GM10248 (cell line): ENCODE measurements at regions of chr17 and their contacts with region 1.

Region 1: GRCh38 chr17:72556944-72557826 is 436.4 kb downstream of the SOX9 start:
- DNase-seq: peak; percentile 84
- CTCF ChIP-seq: peak; percentile 80

Region 2: DNA sequence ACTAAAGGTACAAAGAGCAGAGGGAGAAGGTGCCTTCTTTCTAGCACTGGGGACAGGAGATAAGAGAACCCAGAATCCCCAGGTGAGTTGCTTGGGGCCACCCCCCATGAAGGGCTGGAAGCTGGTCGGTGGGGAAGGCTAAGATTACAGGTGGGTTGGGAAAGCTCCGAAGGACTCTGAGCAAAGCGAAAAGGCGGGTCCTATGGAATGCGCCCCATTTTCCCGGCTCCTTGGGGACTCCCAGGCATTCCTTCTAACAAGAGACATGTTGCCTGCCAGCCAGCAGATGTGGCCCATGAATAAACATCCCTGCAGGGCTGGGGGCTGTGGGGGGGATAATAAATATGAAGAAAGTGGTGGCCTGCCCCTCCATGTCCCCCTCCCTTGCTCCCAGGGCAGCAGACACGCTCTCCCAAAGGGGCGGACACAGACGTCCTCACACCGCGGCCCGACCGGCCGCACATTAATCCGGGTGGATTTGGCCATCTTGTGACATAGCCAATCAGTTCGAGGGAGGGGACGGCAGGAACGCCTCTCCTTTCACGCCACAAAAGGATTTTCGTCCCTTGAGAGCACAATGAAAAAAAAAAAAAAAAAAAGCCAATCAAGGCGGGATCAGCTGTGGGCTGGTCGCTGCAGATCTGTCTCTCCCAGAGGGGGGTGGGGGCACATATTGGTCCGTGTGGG is 337.9 kb before region 1 on chr17:
- CTCF ChIA-PET with region 1: no interaction called
- POLR2A ChIA-PET with region 1: no interaction called
- DNase-seq: no peak
- CTCF ChIP-seq: no peak

Region 3: DNA sequence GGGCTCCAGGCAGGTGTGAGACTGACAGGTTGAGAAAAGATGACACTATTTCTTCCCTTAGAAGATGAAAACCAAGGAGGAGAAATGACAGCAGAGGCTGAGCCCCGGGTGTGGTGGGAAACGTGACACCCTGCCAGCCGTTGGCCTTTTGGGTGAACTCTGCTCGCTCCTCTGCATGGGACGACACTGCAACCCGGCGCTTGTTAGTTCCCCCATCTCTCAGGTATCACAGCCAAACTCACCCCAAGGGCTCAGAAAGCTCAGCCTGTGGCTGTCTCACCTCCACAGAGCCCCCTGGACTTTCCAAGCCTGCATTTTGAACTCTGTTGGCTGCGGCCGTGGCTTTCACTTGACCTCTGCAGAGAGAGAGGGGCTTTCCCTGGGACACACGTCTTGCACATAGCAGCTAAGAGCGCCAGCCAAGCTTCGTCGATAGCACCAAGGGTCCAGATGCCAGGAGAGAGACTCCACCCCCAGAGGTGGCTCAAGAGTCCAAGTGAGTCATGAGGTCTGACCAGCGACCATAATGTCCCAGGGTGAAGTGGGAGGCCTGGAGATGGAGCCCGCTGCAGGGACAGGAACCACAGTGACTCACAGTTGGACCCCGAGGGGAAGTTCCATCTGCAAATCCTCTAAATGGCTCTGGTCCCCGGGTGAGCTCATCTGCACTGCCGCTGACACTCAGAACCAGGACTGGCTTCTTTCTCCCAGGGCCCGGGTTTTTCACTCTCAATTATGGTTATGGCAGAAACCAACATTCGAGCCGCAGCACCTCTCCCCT is 134.5 kb before region 1 on chr17:
- CTCF ChIA-PET with region 1: no interaction called
- POLR2A ChIA-PET with region 1: no interaction called
- DNase-seq: peak; percentile 64
- CTCF ChIP-seq: no peak

Region 4: DNA sequence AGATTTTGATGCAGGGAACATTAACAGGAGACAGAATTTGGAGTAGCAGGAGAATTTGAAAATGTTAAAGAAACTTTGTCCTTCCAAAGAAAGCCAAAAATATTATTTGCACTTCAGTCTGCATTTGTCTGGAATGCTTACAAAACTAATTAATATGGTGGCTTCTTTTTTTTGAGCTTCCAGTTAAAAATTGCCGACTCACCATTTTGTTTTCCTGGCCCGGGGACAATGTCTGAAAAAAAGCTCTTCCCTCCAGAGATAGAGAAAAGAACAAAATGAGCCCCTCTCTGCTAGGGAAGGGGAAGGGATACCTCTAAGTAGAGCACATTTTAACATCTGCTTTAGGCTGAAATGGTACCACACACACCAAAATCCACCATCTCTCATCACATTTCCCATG is 75.6 kb before region 1 on chr17:
- CTCF ChIA-PET with region 1: no interaction called
- POLR2A ChIA-PET with region 1: no interaction called
- DNase-seq: no peak
- CTCF ChIP-seq: no peak

Region 5: DNA sequence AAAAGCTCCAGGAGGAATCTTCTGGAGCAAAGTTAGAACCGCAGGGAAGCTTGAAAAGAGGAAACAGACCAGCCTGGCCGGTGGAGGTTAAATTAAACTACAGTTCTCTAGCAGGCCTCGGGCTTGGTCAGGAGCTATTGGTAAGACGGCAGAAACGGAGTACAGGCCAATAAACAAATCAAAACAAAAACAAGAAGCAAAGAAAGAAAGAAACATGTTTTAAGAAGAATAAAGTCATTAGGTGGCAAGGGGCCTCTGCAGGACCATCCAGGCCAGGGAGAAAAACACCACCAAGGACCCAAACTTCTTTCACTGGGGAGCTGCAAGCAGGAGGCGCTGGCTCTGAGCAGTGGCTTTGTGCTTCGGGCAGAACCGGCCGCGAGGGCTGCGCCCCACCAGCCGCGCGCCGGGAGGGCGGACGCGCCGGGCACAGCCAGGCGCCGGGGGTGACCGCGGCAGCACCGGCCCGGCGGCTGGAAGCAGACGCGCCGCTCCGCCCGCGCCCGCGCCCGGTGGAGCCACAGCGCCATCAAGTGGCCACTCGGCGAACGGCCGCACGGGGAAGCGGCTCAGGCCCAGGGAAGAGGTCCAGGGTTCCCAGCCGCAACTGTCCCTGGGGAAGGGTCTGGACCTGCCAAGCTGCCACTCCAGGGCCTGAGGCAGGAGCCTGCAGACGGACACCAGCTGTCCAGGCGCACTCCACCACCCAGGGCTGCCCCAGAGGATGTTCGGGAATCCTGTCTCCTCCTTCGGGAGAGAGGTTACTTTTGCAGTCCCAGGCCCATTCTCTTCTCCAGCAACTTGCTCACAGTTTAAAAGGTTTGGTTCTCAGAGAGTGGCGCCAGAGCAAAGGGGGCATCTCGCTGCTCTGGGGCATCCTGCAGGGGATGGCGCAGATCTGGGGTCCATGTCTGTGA is 16.9 kb before region 1 on chr17:
- CTCF ChIA-PET with region 1: interaction called, 18 read pairs
- POLR2A ChIA-PET with region 1: no interaction called
- DNase-seq: peak; percentile 89
- CTCF ChIP-seq: peak; percentile 97

Region 6: GRCh38 chr17:72569148-72569946 is 12.2 kb after region 1 on chr17:
- CTCF ChIA-PET with region 1: interaction called, 15 read pairs
- POLR2A ChIA-PET with region 1: no interaction called
- DNase-seq: no peak
- CTCF ChIP-seq: no peak

Region 7: GRCh38 chr17:72631949-72632684 is 74.9 kb after region 1 on chr17:
- CTCF ChIA-PET with region 1: no interaction called
- POLR2A ChIA-PET with region 1: no interaction called
- DNase-seq: no peak
- CTCF ChIP-seq: no peak

Region 8: GRCh38 chr17:72715906-72716572 is 158.9 kb after region 1 on chr17:
- CTCF ChIA-PET with region 1: interaction called, 10 read pairs
- POLR2A ChIA-PET with region 1: no interaction called
- DNase-seq: no peak
- CTCF ChIP-seq: no peak

Region 9: GRCh38 chr17:73192894-73193701 is 635.9 kb after region 1 on chr17 and contains the start of gene COG1:
- CTCF ChIA-PET with region 1: interaction called, 16 read pairs
- POLR2A ChIA-PET with region 1: no interaction called
- DNase-seq: peak; percentile 96
- CTCF ChIP-seq: no peak